OCI-LY7 (cell line): ENCODE measurements at regions of chr4 and their contacts with region 1.

Region 1: DNA sequence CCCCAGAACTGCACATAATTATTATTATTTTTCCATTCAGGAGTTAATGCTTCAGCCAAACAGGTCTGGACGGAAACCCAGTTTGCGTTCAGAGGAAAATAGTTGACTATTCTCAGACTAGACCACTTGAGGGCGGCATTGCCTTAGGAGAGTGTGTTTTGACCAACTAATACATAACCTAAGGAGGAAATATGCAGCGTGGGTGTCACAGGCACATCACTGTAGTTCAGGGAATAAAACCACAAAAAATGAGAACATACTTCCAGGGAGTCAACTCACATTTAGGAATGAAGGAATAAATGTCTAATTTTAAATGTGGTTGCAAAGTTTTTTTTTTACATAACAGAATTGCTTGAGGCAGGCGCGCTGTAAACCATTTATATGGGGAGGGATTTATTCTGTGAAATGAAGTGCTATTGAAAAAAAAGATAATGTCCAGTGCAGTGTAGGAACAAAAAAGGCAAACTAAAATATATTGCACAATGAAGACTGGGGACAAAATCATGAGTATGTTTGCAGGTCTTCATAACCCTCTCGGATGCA is 93.3 kb downstream of the SYNPO2 start:
- DNase-seq: peak; percentile 70
- H3K4me3 ChIP-seq: no peak overlapping the region
- H3K27ac ChIP-seq: no peak overlapping the region
- H3K4me1 ChIP-seq: no peaks in the 10 kb centered on the region
- CTCF ChIP-seq: peak; percentile 92

Region 2: GRCh38 chr4:119286377-119287002 is 304.6 kb after region 1 on chr4:
- CTCF ChIA-PET with region 1: no interaction called
- POLR2A ChIA-PET with region 1: no interaction called
- intact Hi-C with region 1: loop called (anchors 2 kb)
- DNase-seq: peak; percentile 57
- H3K4me3 ChIP-seq: no peak overlapping the region
- H3K27ac ChIP-seq: no peak overlapping the region
- H3K4me1 ChIP-seq: peaks cover 4% of the 10 kb centered on the region
- CTCF ChIP-seq: peak; percentile 87

Region 3: DNA sequence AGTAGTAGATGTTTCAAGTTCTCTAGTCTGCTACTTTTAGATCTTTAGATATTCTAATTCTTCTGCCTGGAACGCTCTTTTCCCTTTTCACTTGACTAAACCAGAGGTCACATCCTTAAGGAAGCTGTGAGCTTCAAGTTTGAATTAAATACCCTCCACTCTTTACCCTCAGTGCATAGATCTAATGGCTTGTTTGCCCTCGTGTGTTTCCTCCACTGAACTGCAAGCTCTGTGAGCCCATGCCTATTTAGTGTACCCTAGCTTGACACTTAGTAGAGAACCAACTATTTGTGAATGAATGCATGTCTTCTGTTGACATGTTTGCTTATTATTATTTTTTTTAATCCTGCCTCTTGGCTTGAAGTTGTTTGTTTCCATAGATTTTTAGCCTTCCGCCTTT is 508.4 kb after region 1 on chr4:
- CTCF ChIA-PET with region 1: no interaction called
- POLR2A ChIA-PET with region 1: no interaction called
- intact Hi-C with region 1: loop called (anchors 10 kb)
- DNase-seq: peak; percentile 32
- H3K4me3 ChIP-seq: no peak overlapping the region
- H3K27ac ChIP-seq: no peak overlapping the region
- H3K4me1 ChIP-seq: no peaks in the 10 kb centered on the region
- CTCF ChIP-seq: peak; percentile 58

Region 4: GRCh38 chr4:119628308-119629141 is 646.6 kb after region 1 on chr4 and contains the start of gene PDE5A:
- CTCF ChIA-PET with region 1: no interaction called
- POLR2A ChIA-PET with region 1: no interaction called
- intact Hi-C with region 1: loop called (anchors 5 kb)
- DNase-seq: peak; percentile 68
- H3K4me3 ChIP-seq: peak within 1 kb of the TSS; percentile 62
- H3K27ac ChIP-seq: no peak within 1 kb of the TSS
- H3K4me1 ChIP-seq: peaks cover 13% of the 10 kb centered on the region
- CTCF ChIP-seq: peak; percentile 70
- total RNA-seq, gene PDE5A: 0.22 and 1.5 TPM in 2 replicates

Region 5: DNA sequence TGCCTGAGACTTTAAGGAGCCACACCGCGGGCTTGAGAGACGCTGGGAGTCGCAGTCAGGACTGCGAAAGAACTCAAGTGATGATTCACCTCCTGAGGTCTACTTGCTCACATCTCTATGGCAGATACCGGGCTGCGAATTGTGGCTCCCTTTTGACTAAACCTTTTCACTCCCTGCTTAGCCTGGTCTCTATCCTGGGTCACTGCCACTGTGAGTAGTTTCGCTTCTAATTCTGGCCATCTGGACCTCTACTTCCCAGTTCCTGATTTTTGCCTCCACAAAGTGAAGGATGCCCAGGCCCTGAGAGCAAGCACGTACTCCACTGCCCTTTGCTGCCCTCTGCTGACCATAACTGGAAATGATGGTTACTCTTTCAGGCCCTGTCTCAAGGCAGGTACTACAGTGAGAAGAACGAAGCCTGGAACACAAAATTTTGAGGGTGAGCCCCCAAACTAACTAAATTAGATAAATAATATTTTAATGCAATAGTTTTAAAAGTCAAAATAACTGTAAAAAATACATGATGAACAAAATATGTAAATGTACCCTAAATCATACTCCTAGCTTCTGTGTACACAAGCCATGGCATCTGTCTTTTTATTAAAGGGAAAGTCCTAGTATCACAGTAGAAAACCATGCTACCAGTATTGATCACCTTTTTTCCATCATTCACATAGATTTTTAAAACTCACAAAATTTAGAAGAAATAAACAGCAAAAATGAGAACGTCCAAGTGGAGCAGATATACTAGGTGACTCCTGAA is 1068.0 kb after region 1 on chr4:
- CTCF ChIA-PET with region 1: no interaction called
- POLR2A ChIA-PET with region 1: no interaction called
- intact Hi-C with region 1: loop called (anchors 5 kb)
- DNase-seq: peak; percentile 73
- H3K4me3 ChIP-seq: no peak overlapping the region
- H3K27ac ChIP-seq: no peak overlapping the region
- H3K4me1 ChIP-seq: peaks cover 13% of the 10 kb centered on the region
- CTCF ChIP-seq: peak; percentile 92

Region 6: DNA sequence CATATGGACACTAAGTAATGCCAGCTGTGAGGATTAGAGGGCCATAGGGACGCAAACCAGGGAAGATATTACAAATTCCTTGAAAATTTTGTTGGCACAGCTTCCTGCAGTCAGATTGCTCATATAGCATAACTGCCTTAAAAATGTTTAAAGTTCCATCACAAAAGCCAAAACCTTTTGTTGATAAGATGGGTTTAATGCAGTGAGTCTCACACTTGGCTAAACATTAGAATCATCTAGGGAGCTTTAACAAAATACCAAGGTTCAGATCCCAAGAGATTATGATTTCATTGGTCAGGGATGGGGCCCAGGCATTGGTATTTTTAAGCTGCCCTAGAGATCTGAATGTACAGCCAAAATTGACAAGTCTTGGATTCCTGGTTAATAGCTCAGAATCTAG is 1461.2 kb after region 1 on chr4:
- CTCF ChIA-PET with region 1: no interaction called
- POLR2A ChIA-PET with region 1: no interaction called
- intact Hi-C with region 1: no loop called
- DNase-seq: no peak
- H3K4me3 ChIP-seq: no peak overlapping the region
- H3K27ac ChIP-seq: no peak overlapping the region
- H3K4me1 ChIP-seq: no peaks in the 10 kb centered on the region
- CTCF ChIP-seq: no peak